ENCODE measurements at regions of chr10 and their contacts with region 1.

Region 1: DNA sequence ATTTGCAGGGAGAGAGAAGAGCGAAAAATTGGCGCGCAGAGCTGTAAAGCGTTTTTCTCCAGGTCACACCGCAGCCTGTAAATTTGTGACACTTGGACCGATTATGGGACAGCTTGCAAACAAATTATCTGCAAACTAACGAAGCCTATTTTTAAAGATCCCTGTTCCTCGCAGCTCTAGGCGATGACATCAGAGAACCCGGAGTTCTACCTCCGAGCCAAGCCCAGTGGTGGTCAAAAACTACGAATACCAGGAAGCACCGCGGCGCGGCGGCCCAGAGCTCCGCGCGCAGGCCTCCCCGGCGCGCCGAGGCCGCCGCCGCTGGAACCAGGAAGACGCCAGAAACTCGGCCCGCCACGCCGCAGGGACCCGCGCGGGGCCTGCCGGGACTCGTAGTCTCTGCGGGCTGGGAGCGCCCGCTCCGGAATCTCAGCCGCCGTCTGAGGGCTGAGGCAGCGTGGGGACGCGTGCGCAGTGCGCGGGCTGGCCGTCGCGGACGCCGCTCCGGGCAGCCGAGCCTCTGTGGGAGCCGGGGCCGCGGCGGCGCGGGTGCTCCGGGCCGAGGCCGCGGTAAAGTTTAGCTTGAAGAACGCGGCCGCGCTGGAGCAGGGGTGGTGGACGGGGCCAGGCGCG is at the start of gene PLEKHA1:
- DNase-seq: peak; percentile 88 to 96 (median 92)
- ATAC-seq: peak; percentile 89
- H3K4me3 ChIP-seq: peak within 1 kb of the TSS; percentile 93 to 96
- H3K4me3 Mint-ChIP-seq: peak within 1 kb of the TSS; percentile 93
- H3K27ac ChIP-seq: peak within 1 kb of the TSS; percentile 80 to 92
- H3K27ac Mint-ChIP-seq: peak within 1 kb of the TSS; percentile 96
- H3K4me1 ChIP-seq: peaks cover 24% of the 10 kb centered on the region
- H3K4me1 Mint-ChIP-seq: peaks cover 35% of the 10 kb centered on the region
- H3K27me3 ChIP-seq: no peaks in the 10 kb centered on the region
- H3K27me3 Mint-ChIP-seq: peaks cover 2% of the 10 kb centered on the region
- CTCF ChIP-seq: no peak
- total RNA-seq, gene PLEKHA1: 23.6 to 24.6 TPM

Region 2: GRCh38 chr10:120850911-120851865 is 1523.2 kb before region 1 on chr10 and contains the start of gene WDR11:
- CTCF ChIA-PET with region 1: no interaction called
- POLR2A ChIA-PET with region 1: no interaction called
- intact Hi-C with region 1: loop called in 1 of 2 experiments (anchors 10 kb)
- DNase-seq: peak; percentile 22 to 85 (median 67)
- ATAC-seq: peak; percentile 87
- H3K4me3 ChIP-seq: peak within 1 kb of the TSS; percentile 80 to 88
- H3K4me3 Mint-ChIP-seq: peak within 1 kb of the TSS; percentile 97
- H3K27ac ChIP-seq: peak within 1 kb of the TSS; percentile 52 to 86
- H3K27ac Mint-ChIP-seq: peak within 1 kb of the TSS; percentile 97
- H3K4me1 ChIP-seq: peaks cover 10% of the 10 kb centered on the region
- H3K4me1 Mint-ChIP-seq: peaks cover 44% of the 10 kb centered on the region
- H3K27me3 ChIP-seq: no peaks in the 10 kb centered on the region
- H3K27me3 Mint-ChIP-seq: no peaks in the 10 kb centered on the region
- CTCF ChIP-seq: no peak
- total RNA-seq, gene WDR11: 19.8 to 23.0 TPM

Region 3: GRCh38 chr10:121088524-121088923 is 1285.8 kb before region 1 on chr10:
- CTCF ChIA-PET with region 1: no interaction called
- POLR2A ChIA-PET with region 1: no interaction called
- intact Hi-C with region 1: no loop called
- DNase-seq: no peak
- ATAC-seq: no peak
- H3K4me3 ChIP-seq: no peak overlapping the region
- H3K4me3 Mint-ChIP-seq: no peak overlapping the region
- H3K27ac ChIP-seq: no peak overlapping the region
- H3K27ac Mint-ChIP-seq: no peak overlapping the region
- H3K4me1 ChIP-seq: no peaks in the 10 kb centered on the region
- H3K4me1 Mint-ChIP-seq: no peaks in the 10 kb centered on the region
- H3K27me3 ChIP-seq: no peaks in the 10 kb centered on the region
- H3K27me3 Mint-ChIP-seq: no peaks in the 10 kb centered on the region
- CTCF ChIP-seq: no peak

Region 4: GRCh38 chr10:121927841-121928527 is 446.4 kb before region 1 on chr10 and contains the start of gene ATE1:
- CTCF ChIA-PET with region 1: no interaction called
- POLR2A ChIA-PET with region 1: interaction called, 4 read pairs
- intact Hi-C with region 1: loop called (anchors 5 kb)
- DNase-seq: peak; percentile 68 to 91 (median 81)
- ATAC-seq: peak; percentile 90
- H3K4me3 ChIP-seq: peak within 1 kb of the TSS; percentile 72 to 87
- H3K4me3 Mint-ChIP-seq: peak within 1 kb of the TSS; percentile 91
- H3K27ac ChIP-seq: peak within 1 kb of the TSS; percentile 91 to 94
- H3K27ac Mint-ChIP-seq: peak within 1 kb of the TSS; percentile 97
- H3K4me1 ChIP-seq: peaks cover 14% of the 10 kb centered on the region
- H3K4me1 Mint-ChIP-seq: peaks cover 30% of the 10 kb centered on the region
- H3K27me3 ChIP-seq: no peaks in the 10 kb centered on the region
- H3K27me3 Mint-ChIP-seq: no peaks in the 10 kb centered on the region
- CTCF ChIP-seq: no peak
- total RNA-seq, gene ATE1: 11.6 to 14.6 TPM

Region 5: DNA sequence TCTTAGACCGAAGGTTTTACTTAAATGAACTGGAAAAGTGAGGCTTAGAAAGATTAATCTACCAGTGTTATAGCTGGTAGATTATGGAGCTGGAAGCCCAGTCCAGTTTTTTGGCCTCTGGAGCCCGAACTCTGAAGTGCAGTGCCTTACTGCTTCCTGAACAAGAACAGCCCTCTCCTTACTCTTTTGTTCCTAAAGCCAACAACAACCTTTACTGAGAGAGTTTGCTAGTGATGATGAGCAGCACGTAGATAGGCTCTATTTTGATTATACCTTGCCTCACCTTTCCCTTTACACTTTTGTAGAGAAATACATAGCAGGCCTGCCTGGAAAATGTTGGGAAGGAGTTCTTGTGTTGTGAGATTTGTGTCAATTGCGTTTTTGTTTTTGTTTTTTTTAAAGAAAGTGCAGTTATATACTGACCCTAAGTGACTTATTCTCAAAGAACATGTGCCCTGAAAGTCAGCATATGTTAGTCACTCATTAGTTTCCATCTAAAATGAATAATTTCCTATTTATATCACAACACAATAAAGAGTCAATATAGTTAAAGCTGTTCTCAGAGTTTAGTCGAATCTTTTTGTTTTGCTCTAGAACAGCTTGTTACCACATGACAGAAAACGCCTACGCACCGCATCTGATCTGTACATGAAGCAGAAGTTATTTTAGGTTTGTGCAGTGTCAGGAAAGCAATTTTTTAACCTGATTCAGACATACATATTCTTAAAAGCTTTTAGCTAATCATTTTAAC is 33.2 kb after region 1 on chr10:
- CTCF ChIA-PET with region 1: interaction called, 5 read pairs
- POLR2A ChIA-PET with region 1: interaction called, 12 read pairs
- intact Hi-C with region 1: no loop called
- DNase-seq: peak in 8 of 9 experiments; percentile 13 to 77 (median 49)
- ATAC-seq: peak; percentile 62
- H3K4me3 ChIP-seq: peak overlapping the region in 1 of 2 experiments; percentile 15
- H3K4me3 Mint-ChIP-seq: peak overlapping the region; percentile 6
- H3K27ac ChIP-seq: peak overlapping the region in 1 of 2 experiments; percentile 24
- H3K27ac Mint-ChIP-seq: peak overlapping the region; percentile 86
- H3K4me1 ChIP-seq: peaks cover 50% of the 10 kb centered on the region
- H3K4me1 Mint-ChIP-seq: peaks cover 46% of the 10 kb centered on the region
- H3K27me3 ChIP-seq: no peaks in the 10 kb centered on the region
- H3K27me3 Mint-ChIP-seq: no peaks in the 10 kb centered on the region
- CTCF ChIP-seq: no peak

Region 6: GRCh38 chr10:122435212-122435827 is 61.0 kb after region 1 on chr10:
- CTCF ChIA-PET with region 1: interaction called, 27 read pairs
- POLR2A ChIA-PET with region 1: interaction called, 16 read pairs
- intact Hi-C with region 1: loop called in 1 of 2 experiments (anchors 2 kb)
- DNase-seq: peak in 3 of 9 experiments; percentile 19 to 73 (median 63)
- ATAC-seq: peak; percentile 54
- H3K4me3 ChIP-seq: no peak overlapping the region
- H3K4me3 Mint-ChIP-seq: no peak overlapping the region
- H3K27ac ChIP-seq: no peak overlapping the region
- H3K27ac Mint-ChIP-seq: no peak overlapping the region
- H3K4me1 ChIP-seq: no peaks in the 10 kb centered on the region
- H3K4me1 Mint-ChIP-seq: no peaks in the 10 kb centered on the region
- H3K27me3 ChIP-seq: no peaks in the 10 kb centered on the region
- H3K27me3 Mint-ChIP-seq: no peaks in the 10 kb centered on the region
- CTCF ChIP-seq: peak; percentile 90

Region 7: GRCh38 chr10:122953827-122954730 is 579.7 kb after region 1 on chr10 and contains the start of gene C10orf88:
- CTCF ChIA-PET with region 1: no interaction called
- POLR2A ChIA-PET with region 1: no interaction called
- intact Hi-C with region 1: loop called (anchors 1 to 5 kb)
- DNase-seq: peak; percentile 95 to 100 (median 97)
- ATAC-seq: peak; percentile 91
- H3K4me3 ChIP-seq: peak within 1 kb of the TSS; percentile 67 to 82
- H3K4me3 Mint-ChIP-seq: peak within 1 kb of the TSS; percentile 86
- H3K27ac ChIP-seq: peak within 1 kb of the TSS; percentile 36 to 72
- H3K27ac Mint-ChIP-seq: peak within 1 kb of the TSS; percentile 86
- H3K4me1 ChIP-seq: peaks cover 21% of the 10 kb centered on the region
- H3K4me1 Mint-ChIP-seq: peaks cover 46% of the 10 kb centered on the region
- H3K27me3 ChIP-seq: no peaks in the 10 kb centered on the region
- H3K27me3 Mint-ChIP-seq: no peaks in the 10 kb centered on the region
- CTCF ChIP-seq: no peak
- total RNA-seq, gene C10orf88: 2.2 to 2.8 TPM